ENCODE measurements at regions of chr2 and their contacts with region 1.

Region 1: GRCh38 chr2:113080134-113080533 is 12.4 kb downstream of the IL1F10 start:
- DNase-seq: peak; percentile 1 to 58 (median 34)
- ATAC-seq: peak; percentile 44
- H3K4me3 ChIP-seq: no peak overlapping the region
- H3K4me3 Mint-ChIP-seq: no peak overlapping the region
- H3K27ac ChIP-seq: no peak overlapping the region
- H3K27ac Mint-ChIP-seq: no peak overlapping the region
- H3K4me1 ChIP-seq: peaks cover 7% of the 10 kb centered on the region
- H3K4me1 Mint-ChIP-seq: peaks cover 7% of the 10 kb centered on the region
- H3K27me3 ChIP-seq: no peaks in the 10 kb centered on the region
- H3K27me3 Mint-ChIP-seq: no peaks in the 10 kb centered on the region
- CTCF ChIP-seq: peak; percentile 67

Region 2: GRCh38 chr2:113064281-113064680 is 15.9 kb before region 1 on chr2:
- CTCF ChIA-PET with region 1: interaction called, 11 read pairs
- POLR2A ChIA-PET with region 1: no interaction called
- intact Hi-C with region 1: no loop called
- DNase-seq: no peak
- ATAC-seq: no peak
- H3K4me3 ChIP-seq: no peak overlapping the region
- H3K4me3 Mint-ChIP-seq: no peak overlapping the region
- H3K27ac ChIP-seq: no peak overlapping the region
- H3K27ac Mint-ChIP-seq: no peak overlapping the region
- H3K4me1 ChIP-seq: no peaks in the 10 kb centered on the region
- H3K4me1 Mint-ChIP-seq: no peaks in the 10 kb centered on the region
- H3K27me3 ChIP-seq: no peaks in the 10 kb centered on the region
- H3K27me3 Mint-ChIP-seq: peaks cover 3% of the 10 kb centered on the region
- CTCF ChIP-seq: no peak

Region 3: GRCh38 chr2:113098041-113098440 is 17.9 kb after region 1 on chr2:
- CTCF ChIA-PET with region 1: interaction called, 10 read pairs
- POLR2A ChIA-PET with region 1: no interaction called
- intact Hi-C with region 1: no loop called
- DNase-seq: peak in 2 of 9 experiments; percentile 12 to 41
- ATAC-seq: peak; percentile 56
- H3K4me3 ChIP-seq: no peak overlapping the region
- H3K4me3 Mint-ChIP-seq: peak overlapping the region; percentile 49
- H3K27ac ChIP-seq: no peak overlapping the region
- H3K27ac Mint-ChIP-seq: peak overlapping the region; percentile 56
- H3K4me1 ChIP-seq: peaks cover 7% of the 10 kb centered on the region
- H3K4me1 Mint-ChIP-seq: peaks cover 11% of the 10 kb centered on the region
- H3K27me3 ChIP-seq: no peaks in the 10 kb centered on the region
- H3K27me3 Mint-ChIP-seq: peaks cover 2% of the 10 kb centered on the region
- CTCF ChIP-seq: no peak

Measured in CD8-positive, alpha-beta T cell (primary cell).